ENCODE measurements at regions of chr19 and their contacts with region 1.

Region 1: DNA sequence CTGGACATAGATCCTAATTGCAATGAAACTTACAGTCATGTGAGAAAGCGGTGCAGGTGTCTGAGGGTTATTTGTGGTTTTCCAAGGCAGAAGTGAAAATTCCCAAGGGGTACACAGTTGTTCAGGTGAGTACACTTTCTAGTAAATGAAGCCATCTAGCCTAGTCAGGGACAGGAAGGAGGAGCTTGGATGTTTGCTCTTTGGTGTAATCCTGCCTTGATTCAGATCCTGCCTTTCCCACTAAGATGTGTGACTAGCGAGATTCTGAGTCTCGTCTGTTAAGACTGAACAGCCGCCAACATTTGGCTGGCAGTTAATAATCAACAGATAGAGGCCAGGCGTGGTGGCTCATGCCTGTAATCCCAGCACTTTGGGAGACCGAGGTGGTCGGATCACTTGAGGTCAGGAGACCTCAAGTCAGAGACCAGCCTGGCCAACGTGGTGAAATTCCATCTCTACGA is 2.5 kb downstream of the RPS9 start:
- DNase-seq: no peak
- ATAC-seq: no peak
- H3K4me3 ChIP-seq: peak overlapping the region in 3 of 10 donors; percentile 11 to 67 (median 65)
- H3K27ac ChIP-seq: peak overlapping the region in 3 of 10 donors; percentile 12 to 99 (median 21)
- H3K4me1 ChIP-seq: peaks cover 11 to 76% (median 61%) of the 10 kb centered on the region in 9 donors
- H3K27me3 ChIP-seq: no peaks in the 10 kb centered on the region
- CTCF ChIP-seq: no peak

Region 2: DNA sequence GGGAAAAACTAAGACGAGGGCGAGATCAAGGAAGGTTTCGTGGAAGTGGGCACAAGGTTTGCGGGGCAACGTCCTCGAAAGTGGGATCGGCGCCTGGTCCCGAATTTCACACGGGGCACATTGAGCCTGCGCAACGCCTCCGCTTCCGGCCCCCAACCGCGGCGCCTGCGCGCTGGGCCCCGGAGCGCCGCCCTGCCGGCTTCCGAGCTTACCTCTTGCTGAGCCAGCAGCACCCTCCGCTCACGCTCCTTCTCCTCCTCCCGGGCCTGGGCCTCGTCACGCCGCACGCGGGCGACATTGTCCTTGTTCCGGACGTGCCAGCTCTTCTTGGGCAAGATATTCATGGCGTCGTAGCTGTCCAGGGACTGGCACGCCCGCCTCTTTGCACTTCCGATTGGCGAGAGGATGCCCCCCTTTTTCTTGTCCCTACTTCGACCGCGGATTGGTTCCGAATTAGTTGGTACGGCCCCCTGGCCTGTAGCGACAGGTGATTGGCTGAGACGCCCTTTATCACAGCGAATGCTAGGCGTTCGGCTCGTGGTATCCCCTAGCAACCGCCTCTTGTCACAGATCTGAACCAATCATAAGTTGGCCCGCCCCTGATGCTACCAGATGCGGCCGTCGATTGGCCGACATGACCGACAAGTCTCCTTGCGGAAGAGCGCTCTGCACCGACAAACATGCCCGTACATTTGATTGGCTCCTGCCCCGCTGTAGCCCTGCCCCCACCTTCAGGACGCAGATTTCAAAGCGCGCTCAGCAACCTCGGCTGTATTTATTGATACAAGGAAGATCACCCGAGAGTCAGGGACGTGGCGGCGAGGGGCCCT is 43.6 kb before region 1 on chr19 and contains the start of gene LENG1:
- intact Hi-C with region 1: loop called in 2 of 10 experiments (anchors 5 kb)
- DNase-seq: peak; percentile 96 to 100
- ATAC-seq: peak; percentile 91 to 97 (median 95)
- H3K4me3 ChIP-seq: peak within 1 kb of the TSS; percentile 58 to 78 (median 70)
- H3K27ac ChIP-seq: peak within 1 kb of the TSS; percentile 88 to 97 (median 95)
- H3K4me1 ChIP-seq: peaks cover 4 to 63% (median 36%) of the 10 kb centered on the region in 9 donors
- H3K27me3 ChIP-seq: peaks cover 0 to 6% (median 3%) of the 10 kb centered on the region in 7 donors
- CTCF ChIP-seq: peak in 8 of 9 donors; percentile 14 to 66 (median 46)
- total RNA-seq, gene LENG1: 5.4 to 8.4 (median 6.9) TPM

Region 3: GRCh38 chr19:54190503-54191010 is 12.6 kb before region 1 on chr19:
- intact Hi-C with region 1: loop called in 3 of 10 experiments (anchors 1 kb)
- DNase-seq: peak; percentile 99 to 100
- ATAC-seq: peak; percentile 78 to 89 (median 82)
- H3K4me3 ChIP-seq: peak overlapping the region; percentile 77 to 95 (median 86)
- H3K27ac ChIP-seq: peak overlapping the region; percentile 92 to 100 (median 96)
- H3K4me1 ChIP-seq: peaks cover 10 to 30% (median 22%) of the 10 kb centered on the region in 9 donors
- H3K27me3 ChIP-seq: no peaks in the 10 kb centered on the region
- CTCF ChIP-seq: no peak